Ascending aorta (tissue), 2 donors: ENCODE measurements at regions of chrX and their contacts with region 1.

Region 1: DNA sequence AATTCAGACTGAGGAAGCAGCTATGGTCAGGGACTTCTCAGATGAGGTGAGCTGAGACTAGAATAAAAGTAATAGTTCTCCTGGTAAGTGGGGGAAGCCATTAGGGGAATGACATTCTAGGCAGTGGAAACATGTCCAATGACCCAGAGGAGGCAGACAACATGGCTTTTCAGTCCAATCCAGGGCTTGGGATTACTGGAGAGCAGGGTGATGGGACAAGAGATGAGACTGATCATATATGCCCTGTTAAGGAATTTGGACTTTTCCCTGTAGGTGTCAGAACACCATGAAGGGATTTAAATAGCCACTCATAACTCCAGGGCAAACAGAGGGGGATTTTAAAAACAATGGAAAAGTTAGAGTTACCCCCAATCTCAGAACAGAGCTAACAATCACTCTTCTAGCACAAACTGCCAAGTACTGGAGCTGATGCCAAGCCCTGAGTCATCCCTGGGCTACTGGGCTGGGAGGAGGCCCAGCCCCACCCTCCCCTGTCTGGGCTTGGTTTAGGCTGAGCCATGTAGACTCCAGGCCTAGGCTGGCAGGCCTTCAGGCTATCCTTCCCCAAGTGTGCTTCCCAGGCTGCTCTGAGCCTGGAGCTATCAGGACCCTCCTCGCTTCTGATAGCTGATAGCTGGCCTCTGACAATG is 22.7 kb upstream of the MSN start:
- DNase-seq: peak; percentile 83 to 95
- H3K4me3 ChIP-seq: no peak overlapping the region
- H3K27ac ChIP-seq: peak overlapping the region; percentile 78 to 80
- H3K4me1 ChIP-seq: peaks cover 0 to 29% of the 10 kb centered on the region in 2 donors
- H3K27me3 ChIP-seq: no peaks in the 10 kb centered on the region
- CTCF ChIP-seq: no peak

Region 2: GRCh38 chrX:65601530-65602220 is 43.1 kb before region 1 on chrX:
- intact Hi-C with region 1: loop called (anchors 1 kb)
- DNase-seq: peak; percentile 80 to 96
- H3K4me3 ChIP-seq: no peak overlapping the region
- H3K27ac ChIP-seq: peak overlapping the region; percentile 88 to 89
- H3K4me1 ChIP-seq: peaks cover 10 to 37% of the 10 kb centered on the region in 2 donors
- H3K27me3 ChIP-seq: no peaks in the 10 kb centered on the region
- CTCF ChIP-seq: peak in 2 of 3 experiments; percentile 26 to 38

Region 3: DNA sequence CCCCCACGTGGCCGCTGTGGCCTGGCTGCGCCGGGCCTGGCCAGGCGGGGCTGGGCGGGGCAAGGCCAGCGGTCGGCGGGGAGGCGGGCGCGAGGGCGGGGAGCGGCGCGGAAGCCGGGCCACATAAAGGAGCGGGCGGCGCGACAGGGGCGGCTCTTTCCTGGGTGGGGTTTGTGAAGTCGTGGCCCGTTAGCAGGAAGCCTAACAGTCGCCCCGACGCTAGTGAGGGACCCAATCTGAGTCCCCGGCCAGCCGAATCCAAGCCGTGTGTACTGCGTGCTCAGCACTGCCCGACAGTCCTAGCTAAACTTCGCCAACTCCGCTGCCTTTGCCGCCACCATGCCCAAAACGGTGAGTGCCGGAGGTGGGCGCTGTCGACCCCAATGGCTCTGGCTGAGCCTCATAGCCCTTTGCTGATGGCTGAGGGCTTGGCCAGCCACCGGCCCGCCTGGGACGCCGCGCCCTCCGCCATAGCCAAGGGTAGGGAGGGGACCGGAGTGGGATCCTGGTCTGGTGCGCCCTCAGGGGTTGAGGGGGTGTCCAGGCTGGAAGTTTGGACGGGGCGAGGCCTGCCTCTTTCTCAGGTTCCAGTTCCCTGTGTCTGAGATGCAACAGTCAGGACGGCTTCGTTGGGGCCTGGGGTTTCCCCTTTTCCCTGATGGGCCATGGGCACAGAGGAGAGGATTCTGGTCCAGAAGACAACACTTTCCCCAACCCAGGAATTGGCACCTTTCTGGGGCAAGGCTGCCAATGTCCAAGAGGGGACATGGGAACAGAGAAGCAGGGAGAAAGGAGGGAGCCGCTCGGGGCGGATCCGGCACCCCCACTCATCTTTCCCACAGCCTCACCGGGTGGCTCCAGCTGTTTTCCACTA is 23.0 kb after region 1 on chrX and contains the start of gene MSN:
- intact Hi-C with region 1: loop called (anchors 1 kb)
- DNase-seq: peak in 1 of 2 donors; percentile 85
- H3K4me3 ChIP-seq: peak within 1 kb of the TSS; percentile 73 to 74
- H3K27ac ChIP-seq: peak within 1 kb of the TSS; percentile 91 to 99
- H3K4me1 ChIP-seq: peaks cover 0 to under 1% of the 10 kb centered on the region in 2 donors
- H3K27me3 ChIP-seq: no peaks in the 10 kb centered on the region
- CTCF ChIP-seq: no peak
- total RNA-seq, gene MSN: 338 TPM